ENCODE measurements at regions of chr3 and their contacts with region 1.

Region 1: GRCh38 chr3:132416807-132417694 is at the start of gene DNAJC13:
- DNase-seq: peak; percentile 73
- ATAC-seq: peak; percentile 98
- H3K4me3 ChIP-seq: peak within 1 kb of the TSS; percentile 90 to 99
- H3K27ac ChIP-seq: peak within 1 kb of the TSS; percentile 97
- H3K4me1 ChIP-seq: peaks cover 23% of the 10 kb centered on the region
- H3K27me3 ChIP-seq: peaks cover 3% of the 10 kb centered on the region; the same call in 1 of the 2 replicates
- CTCF ChIP-seq: no peak
- total RNA-seq, gene DNAJC13: 54.2 TPM

Region 2: DNA sequence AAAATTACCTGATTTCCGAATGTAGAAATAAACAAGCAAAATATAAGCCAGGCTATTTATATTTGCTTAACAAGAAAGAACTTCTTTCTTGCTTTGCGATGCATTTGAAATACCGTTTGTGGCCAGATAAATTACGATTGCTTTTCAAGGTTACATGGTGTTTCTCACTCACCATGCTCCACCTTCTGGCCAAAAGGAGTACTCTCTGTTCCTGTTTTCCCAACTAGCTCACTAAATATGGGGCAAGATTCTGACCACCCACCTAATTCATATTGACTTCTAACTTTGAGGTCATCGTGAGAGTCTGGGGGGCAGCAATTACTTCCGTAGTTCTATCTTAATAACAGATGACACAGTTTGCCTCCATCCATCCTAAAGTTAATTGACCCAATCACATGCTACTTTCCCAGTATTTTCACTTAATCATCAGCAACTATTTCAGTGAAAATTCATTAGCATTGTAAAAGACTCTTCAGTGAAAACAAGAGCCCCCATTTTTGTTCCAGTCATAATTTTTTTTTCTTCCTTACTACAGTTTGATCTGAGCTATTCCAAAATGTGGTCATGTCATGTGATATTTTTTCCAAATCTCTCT is 73.9 kb before region 1 on chr3:
- CTCF ChIA-PET with region 1: no interaction called
- POLR2A ChIA-PET with region 1: no interaction called
- in situ Hi-C with region 1: no loop called
- intact Hi-C with region 1: no loop called
- DNase-seq: peak; percentile 43
- ATAC-seq: peak; percentile 79; the same call in 1 of the 2 replicates
- H3K4me3 ChIP-seq: no peak overlapping the region
- H3K27ac ChIP-seq: no peak overlapping the region
- H3K4me1 ChIP-seq: no peaks in the 10 kb centered on the region
- H3K27me3 ChIP-seq: peaks cover 23% of the 10 kb centered on the region
- CTCF ChIP-seq: peak; percentile 83

Region 3: GRCh38 chr3:132399054-132399929 is 17.8 kb before region 1 on chr3:
- CTCF ChIA-PET with region 1: no interaction called
- POLR2A ChIA-PET with region 1: no interaction called
- in situ Hi-C with region 1: no loop called
- intact Hi-C with region 1: no loop called
- DNase-seq: peak; percentile 28
- ATAC-seq: peak; percentile 86
- H3K4me3 ChIP-seq: no peak overlapping the region
- H3K27ac ChIP-seq: no peak overlapping the region
- H3K4me1 ChIP-seq: no peaks in the 10 kb centered on the region
- H3K27me3 ChIP-seq: peaks cover 27% of the 10 kb centered on the region
- CTCF ChIP-seq: peak; percentile 82

Region 4: DNA sequence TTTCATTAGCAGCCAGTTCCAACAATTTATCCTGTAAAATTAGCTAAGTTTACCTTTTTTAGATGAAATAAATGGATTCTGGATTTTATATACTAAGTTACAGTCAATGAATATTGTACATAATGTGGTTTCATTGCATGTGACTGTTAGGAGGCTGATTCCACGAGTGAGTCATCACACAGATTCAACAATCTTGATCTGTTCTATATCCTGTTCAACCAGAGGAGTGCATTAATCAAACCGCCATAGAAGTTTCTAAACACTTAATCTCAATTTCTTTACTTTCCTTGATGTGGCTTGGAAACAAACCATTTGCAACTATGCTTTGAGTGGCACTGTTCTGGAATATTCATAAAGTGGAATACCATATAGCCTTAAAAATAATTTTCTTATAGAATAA is 15.6 kb after region 1 on chr3:
- CTCF ChIA-PET with region 1: no interaction called
- POLR2A ChIA-PET with region 1: interaction called, 16 read pairs
- in situ Hi-C with region 1: no loop called
- intact Hi-C with region 1: no loop called
- DNase-seq: peak; percentile 42
- ATAC-seq: peak; percentile 58; the same call in 1 of the 2 replicates
- H3K4me3 ChIP-seq: no peak overlapping the region
- H3K27ac ChIP-seq: no peak overlapping the region
- H3K4me1 ChIP-seq: peaks cover 9% of the 10 kb centered on the region; the same call in 1 of the 2 replicates
- H3K27me3 ChIP-seq: no peaks in the 10 kb centered on the region
- CTCF ChIP-seq: no peak

Region 5: GRCh38 chr3:132843851-132844553 is 427.0 kb after region 1 on chr3:
- CTCF ChIA-PET with region 1: no interaction called
- POLR2A ChIA-PET with region 1: no interaction called
- in situ Hi-C with region 1: no loop called
- intact Hi-C with region 1: no loop called
- DNase-seq: no peak
- ATAC-seq: no peak
- H3K4me3 ChIP-seq: no peak overlapping the region
- H3K27ac ChIP-seq: no peak overlapping the region
- H3K4me1 ChIP-seq: no peaks in the 10 kb centered on the region
- H3K27me3 ChIP-seq: no peaks in the 10 kb centered on the region
- CTCF ChIP-seq: no peak

Measured in Panc1 (cell line).